ENCODE measurements at regions of chr2 and their contacts with region 1.

Region 1: GRCh38 chr2:135043345-135043744 is 3.9 kb downstream of the MAP3K19 start:
- DNase-seq: peak in 1 of 2 experiments; percentile 54
- H3K4me3 ChIP-seq: no peak overlapping the region
- H3K27ac ChIP-seq: no peak overlapping the region
- H3K4me1 ChIP-seq: no peaks in the 10 kb centered on the region
- H3K27me3 ChIP-seq: no peaks in the 10 kb centered on the region; a peak in 1 of 7 replicates
- CTCF ChIP-seq: peak; percentile 22 to 53 (median 37)
- EP300 ChIP-seq: no peak
- POLR2A ChIP-seq: no peak
- RAD21 ChIP-seq: 0 out of 4 replicates have a peak, but pooled peaks have one; percentile 4 to 13

Region 2: DNA sequence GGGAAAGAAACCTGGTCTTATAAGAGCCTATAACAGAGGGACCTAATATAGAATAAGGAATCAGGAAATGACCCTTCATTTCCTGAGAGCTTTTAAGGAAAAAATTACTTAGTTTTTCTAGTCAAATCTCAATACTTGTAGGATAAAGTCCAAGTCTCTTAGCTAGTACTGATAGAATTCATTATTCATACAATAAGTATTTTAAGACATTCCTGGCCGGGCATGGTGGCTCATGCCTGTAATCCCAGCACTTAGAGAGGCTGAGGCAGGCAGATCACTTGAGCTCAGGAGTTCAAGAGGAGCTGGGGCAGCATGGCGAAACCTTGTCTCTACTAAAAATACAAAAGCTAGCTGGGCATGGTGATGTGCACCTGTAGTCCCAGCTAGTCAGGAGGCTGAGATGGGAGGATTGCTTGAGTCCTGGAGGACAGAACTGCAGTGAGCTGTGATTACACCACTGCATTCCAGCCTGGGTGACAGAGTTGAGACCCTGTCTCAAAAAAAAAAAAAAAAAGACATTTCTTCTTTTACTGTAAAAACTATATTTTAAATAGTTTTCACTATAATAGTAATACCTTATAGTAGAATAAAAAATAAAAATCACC is 11.9 kb after region 1 on chr2:
- CTCF ChIA-PET with region 1: interaction called, 14 read pairs
- POLR2A ChIA-PET with region 1: interaction called, 3 read pairs
- DNase-seq: no peak
- H3K4me3 ChIP-seq: no peak overlapping the region
- H3K27ac ChIP-seq: no peak overlapping the region
- H3K4me1 ChIP-seq: peaks cover 0 to 6% (median 2%) of the 10 kb centered on the region in 4 experiments; a peak in 2 of 7 replicates
- H3K27me3 ChIP-seq: no peaks in the 10 kb centered on the region
- CTCF ChIP-seq: no peak
- EP300 ChIP-seq: no peak
- POLR2A ChIP-seq: no peak
- RAD21 ChIP-seq: no peak